Panc1 (cell line): ENCODE measurements at regions of chr19 and their contacts with region 1.

Region 1: GRCh38 chr19:40731001-40731400 is 14.1 kb downstream of the ITPKC start:
- DNase-seq: no peak
- ATAC-seq: no peak
- H3K4me3 ChIP-seq: no peak overlapping the region
- H3K27ac ChIP-seq: no peak overlapping the region
- H3K4me1 ChIP-seq: no peaks in the 10 kb centered on the region
- H3K27me3 ChIP-seq: no peaks in the 10 kb centered on the region
- CTCF ChIP-seq: no peak

Region 2: DNA sequence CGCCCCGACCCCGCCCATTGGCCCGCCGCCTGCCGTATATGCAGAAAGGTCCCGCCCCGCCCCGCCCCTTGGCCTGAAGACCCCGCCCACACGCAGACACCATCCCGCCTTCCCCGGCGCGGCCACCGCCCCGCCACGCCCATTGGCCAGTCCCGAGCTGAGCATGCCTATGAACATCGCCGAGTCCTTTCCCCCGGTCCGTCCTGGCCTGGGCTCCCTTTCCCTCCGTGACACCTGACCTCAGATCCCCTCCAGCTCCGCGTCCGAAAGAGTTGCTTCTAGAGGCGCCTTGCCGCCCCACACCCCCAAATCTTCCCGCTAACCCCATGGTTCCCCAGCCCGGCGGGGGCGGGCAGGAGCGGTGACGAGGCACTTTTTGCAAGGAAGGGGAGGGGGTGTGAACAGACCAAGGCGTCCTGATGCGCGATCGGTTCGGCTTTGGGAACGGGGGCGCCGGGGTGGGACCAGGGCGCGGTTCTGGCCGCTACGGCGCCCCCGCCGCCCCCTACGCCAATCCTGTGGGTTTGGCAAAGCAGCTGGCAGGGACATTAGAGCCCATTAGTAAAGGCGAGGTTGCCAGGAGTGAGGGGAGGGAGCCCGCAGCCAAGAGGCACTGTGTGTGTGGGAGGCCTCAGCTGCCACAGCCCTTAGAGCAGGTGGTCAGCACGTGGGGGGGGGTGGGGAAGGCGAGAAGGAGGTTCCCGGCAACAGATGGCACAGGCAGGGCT is 40.1 kb before region 1 on chr19:
- CTCF ChIA-PET with region 1: no interaction called
- POLR2A ChIA-PET with region 1: no interaction called
- in situ Hi-C with region 1: no loop called
- intact Hi-C with region 1: no loop called
- DNase-seq: no peak
- ATAC-seq: peak; percentile 92
- H3K4me3 ChIP-seq: peak overlapping the region; percentile 58 to 73
- H3K27ac ChIP-seq: peak overlapping the region; percentile 81
- H3K4me1 ChIP-seq: peaks cover 9% of the 10 kb centered on the region
- H3K27me3 ChIP-seq: no peaks in the 10 kb centered on the region
- CTCF ChIP-seq: no peak

Region 3: GRCh38 chr19:40716655-40717324 is 14.2 kb before region 1 on chr19 and contains the starts of genes COQ8B and ITPKC:
- CTCF ChIA-PET with region 1: no interaction called
- POLR2A ChIA-PET with region 1: no interaction called
- in situ Hi-C with region 1: no loop called
- intact Hi-C with region 1: no loop called
- DNase-seq: peak; percentile 79
- ATAC-seq: peak; percentile 78
- H3K4me3 ChIP-seq: peak within 1 kb of the TSS; percentile 65 to 77
- H3K27ac ChIP-seq: peak within 1 kb of the TSS; percentile 88
- H3K4me1 ChIP-seq: peaks cover 11% of the 10 kb centered on the region
- H3K27me3 ChIP-seq: no peaks in the 10 kb centered on the region
- CTCF ChIP-seq: no peak
- total RNA-seq, gene COQ8B: 15.6 TPM
- total RNA-seq, gene ITPKC: 7.2 TPM

Region 4: DNA sequence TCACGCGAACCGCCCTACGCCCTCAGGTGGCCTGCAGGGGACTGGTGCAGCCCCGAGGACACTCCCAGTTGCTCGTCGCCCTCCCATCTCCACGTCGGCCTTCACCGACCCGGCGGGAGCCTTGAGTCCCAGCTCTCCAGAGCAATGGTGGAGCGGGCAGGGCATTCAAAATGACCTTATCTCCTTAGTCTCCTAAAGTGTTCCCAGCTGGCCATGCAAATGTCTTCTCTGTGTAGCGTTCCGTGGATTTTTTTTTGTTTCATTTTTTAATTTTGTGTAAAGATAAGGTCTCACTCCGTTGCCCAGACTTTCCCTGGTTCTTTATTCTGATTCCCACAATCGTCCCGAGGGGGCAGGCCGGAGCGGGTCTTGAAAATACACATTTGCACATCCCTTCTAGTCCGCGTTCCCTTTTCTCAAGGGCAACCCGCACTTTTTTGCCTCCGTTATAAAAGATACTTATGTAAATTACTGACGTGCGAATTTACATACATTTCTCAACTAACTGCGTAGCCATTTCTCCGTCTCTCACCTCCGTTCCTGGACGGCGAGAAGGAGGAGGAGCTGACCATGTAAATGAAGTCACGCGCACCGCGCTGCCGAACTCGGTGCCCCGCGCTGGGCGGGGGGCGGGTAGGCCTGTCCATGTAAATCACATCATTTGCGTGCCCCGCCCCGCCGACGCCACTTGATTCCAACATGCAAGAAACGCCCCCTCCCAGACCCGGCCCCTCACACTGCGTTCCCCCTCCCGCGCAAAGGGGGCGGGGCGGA is 67.4 kb after region 1 on chr19:
- CTCF ChIA-PET with region 1: no interaction called
- POLR2A ChIA-PET with region 1: interaction called, 10 read pairs
- in situ Hi-C with region 1: no loop called
- intact Hi-C with region 1: no loop called
- DNase-seq: peak; percentile 87
- ATAC-seq: peak; percentile 92
- H3K4me3 ChIP-seq: peak overlapping the region; percentile 53 to 72
- H3K27ac ChIP-seq: peak overlapping the region; percentile 81
- H3K4me1 ChIP-seq: peaks cover 26% of the 10 kb centered on the region
- H3K27me3 ChIP-seq: no peaks in the 10 kb centered on the region
- CTCF ChIP-seq: peak; percentile 65